Mammary epithelial cell (primary cell): ENCODE measurements at regions of chrX and their contacts with region 1.

Region 1: GRCh38 chrX:106397801-106398538 is 213.8 kb upstream of the RADX start:
- DNase-seq: peak; percentile 12
- H3K4me3 ChIP-seq: no peak overlapping the region
- H3K27ac ChIP-seq: no peak overlapping the region
- H3K4me1 ChIP-seq: no peaks in the 10 kb centered on the region
- H3K27me3 ChIP-seq: no peaks in the 10 kb centered on the region
- CTCF ChIP-seq: peak; percentile 23 to 50

Region 2: DNA sequence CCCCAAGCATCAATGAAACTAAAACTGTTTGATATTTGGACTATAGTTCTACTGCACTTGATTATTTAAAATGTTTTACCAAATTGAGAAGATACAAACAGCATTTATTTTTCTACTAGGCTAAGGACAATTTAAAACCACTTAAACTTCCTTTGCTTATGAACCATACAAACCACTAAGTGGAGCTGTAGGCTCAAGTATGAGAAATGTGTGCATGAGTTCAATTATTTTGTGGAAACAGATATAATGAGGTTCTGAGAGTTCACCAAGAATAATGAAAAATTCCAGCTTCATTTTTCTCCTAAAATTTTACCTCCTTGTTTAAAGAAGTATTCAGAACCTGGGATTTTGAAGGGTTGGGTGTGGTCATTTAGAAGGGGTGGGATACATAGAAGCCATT is 422.6 kb before region 1 on chrX:
- CTCF ChIA-PET with region 1: no interaction called
- dilution Hi-C with region 1: no loop called
- in situ Hi-C with region 1: loop called in 1 of 2 experiments (anchors 10 kb)
- intact Hi-C with region 1: loop called (anchors 1 kb)
- DNase-seq: peak; percentile 14
- H3K4me3 ChIP-seq: no peak overlapping the region
- H3K27ac ChIP-seq: no peak overlapping the region
- H3K4me1 ChIP-seq: no peaks in the 10 kb centered on the region
- H3K27me3 ChIP-seq: peaks cover 2% of the 10 kb centered on the region
- CTCF ChIP-seq: peak; percentile 34 to 51

Region 3: GRCh38 chrX:106039920-106040319 is 358.1 kb before region 1 on chrX:
- CTCF ChIA-PET with region 1: interaction called, 3 read pairs
- dilution Hi-C with region 1: no loop called
- in situ Hi-C with region 1: no loop called
- intact Hi-C with region 1: loop called (anchors 5 kb)
- DNase-seq: peak; percentile 17
- H3K4me3 ChIP-seq: no peak overlapping the region
- H3K27ac ChIP-seq: no peak overlapping the region
- H3K4me1 ChIP-seq: no peaks in the 10 kb centered on the region
- H3K27me3 ChIP-seq: peaks cover 4% of the 10 kb centered on the region
- CTCF ChIP-seq: peak; percentile 56 to 74

Region 4: DNA sequence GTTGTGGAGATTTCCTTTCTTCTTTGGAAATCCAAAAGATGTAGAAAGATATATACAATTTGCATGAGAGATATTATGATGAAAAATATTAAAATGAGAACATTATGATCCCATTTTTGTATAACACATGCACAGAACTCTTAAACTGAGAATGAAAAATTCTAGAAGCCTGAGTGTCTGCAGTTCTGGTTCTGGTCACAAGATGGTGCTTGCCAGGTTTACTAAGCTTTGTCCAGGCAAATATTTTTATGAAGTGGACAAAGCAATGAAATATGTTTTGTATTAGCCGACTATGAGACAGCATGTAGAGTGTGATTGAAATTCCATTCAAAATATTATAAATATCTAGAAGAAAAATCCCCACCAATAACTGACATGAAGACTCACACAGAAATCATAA is 227.7 kb before region 1 on chrX:
- CTCF ChIA-PET with region 1: interaction called, 4 read pairs
- dilution Hi-C with region 1: no loop called
- in situ Hi-C with region 1: no loop called
- intact Hi-C with region 1: loop called (anchors 1 kb)
- DNase-seq: peak; percentile 8
- H3K4me3 ChIP-seq: no peak overlapping the region
- H3K27ac ChIP-seq: no peak overlapping the region
- H3K4me1 ChIP-seq: no peaks in the 10 kb centered on the region
- H3K27me3 ChIP-seq: peaks cover 2% of the 10 kb centered on the region
- CTCF ChIP-seq: peak; percentile 61 to 73

Region 5: GRCh38 chrX:106201502-106202178 is 196.3 kb before region 1 on chrX:
- CTCF ChIA-PET with region 1: no interaction called
- dilution Hi-C with region 1: no loop called
- in situ Hi-C with region 1: loop called in 1 of 2 experiments (anchors 25 kb)
- intact Hi-C with region 1: loop called (anchors 10 kb)
- DNase-seq: no peak
- H3K4me3 ChIP-seq: no peak overlapping the region
- H3K27ac ChIP-seq: no peak overlapping the region
- H3K4me1 ChIP-seq: no peaks in the 10 kb centered on the region
- H3K27me3 ChIP-seq: peaks cover 16% of the 10 kb centered on the region
- CTCF ChIP-seq: no peak

Region 6: DNA sequence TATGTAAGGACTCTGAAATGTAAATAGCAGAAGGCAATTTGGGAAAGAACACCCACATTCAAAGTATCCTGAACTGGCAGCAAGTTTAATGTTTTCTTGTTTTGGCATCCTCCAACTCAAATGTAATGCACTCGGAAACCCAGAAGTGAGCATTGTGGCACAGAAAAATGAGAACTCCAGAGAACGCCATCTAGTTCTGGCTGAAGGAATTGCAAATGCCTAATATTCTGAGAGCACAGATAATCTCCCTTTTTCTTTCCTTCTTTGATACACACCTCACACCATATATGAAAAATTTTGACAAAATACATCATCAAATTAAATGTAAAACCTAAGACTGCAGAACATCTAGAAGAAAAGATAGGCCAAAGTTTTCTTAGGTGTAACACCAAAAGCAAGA is 177.8 kb before region 1 on chrX:
- CTCF ChIA-PET with region 1: no interaction called
- dilution Hi-C with region 1: no loop called
- in situ Hi-C with region 1: loop called in 1 of 2 experiments (anchors 25 kb)
- intact Hi-C with region 1: no loop called
- DNase-seq: no peak
- H3K4me3 ChIP-seq: no peak overlapping the region
- H3K27ac ChIP-seq: no peak overlapping the region
- H3K4me1 ChIP-seq: no peaks in the 10 kb centered on the region
- H3K27me3 ChIP-seq: peaks cover 5% of the 10 kb centered on the region
- CTCF ChIP-seq: peak; percentile 62 to 67